HEK293 (cell line): ENCODE measurements at regions of chr12 and their contacts with region 1.

Region 1: DNA sequence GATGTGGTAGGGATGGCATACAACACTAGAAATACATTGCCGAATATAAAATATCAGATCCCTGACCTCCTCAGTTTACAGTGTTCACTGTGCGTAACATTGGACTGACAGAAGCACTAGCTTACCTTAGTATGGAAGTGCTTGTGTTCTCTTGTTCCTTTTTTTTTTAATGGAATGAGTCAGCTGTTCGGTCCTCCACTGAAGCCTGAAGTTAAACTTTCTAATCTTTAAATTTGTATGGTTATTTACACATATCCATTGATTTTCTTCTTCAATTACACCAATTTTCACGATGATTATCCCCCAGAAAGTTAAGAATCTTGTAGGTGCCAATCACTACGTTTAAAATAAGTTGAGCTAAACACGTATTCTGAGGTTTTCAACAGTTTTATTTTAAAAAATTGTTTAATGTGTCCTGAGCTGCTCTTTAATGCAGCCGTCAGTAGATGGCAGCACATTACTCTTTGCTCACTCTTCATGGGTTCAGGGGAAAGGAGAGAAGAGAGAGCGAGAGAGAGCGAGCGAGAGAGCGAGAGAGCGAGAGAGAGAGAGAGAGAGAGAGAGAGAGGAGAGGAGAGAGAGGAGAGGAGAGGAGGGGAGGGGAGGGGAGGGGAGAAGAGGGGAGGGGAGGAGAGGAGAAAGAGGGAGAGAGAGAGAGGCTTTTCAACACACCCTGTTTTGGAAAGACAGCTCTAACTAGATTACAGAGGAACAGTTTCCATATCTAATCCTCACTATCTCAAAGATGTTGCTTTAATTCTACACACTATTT is 134.7 kb upstream of the SCAF11 start:
- H3K4me3 ChIP-seq: no peak overlapping the region
- H3K27ac ChIP-seq: peak overlapping the region; percentile 71
- H3K4me1 ChIP-seq: peaks cover 11% of the 10 kb centered on the region
- CTCF ChIP-seq: peak; percentile 64

Region 2: GRCh38 chr12:45644541-45644940 is 480.5 kb before region 1 on chr12:
- CTCF ChIA-PET with region 1: no interaction called
- POLR2A ChIA-PET with region 1: no interaction called
- H3K4me3 ChIP-seq: no peak overlapping the region
- H3K27ac ChIP-seq: no peak overlapping the region
- H3K4me1 ChIP-seq: no peaks in the 10 kb centered on the region
- CTCF ChIP-seq: no peak

Region 3: DNA sequence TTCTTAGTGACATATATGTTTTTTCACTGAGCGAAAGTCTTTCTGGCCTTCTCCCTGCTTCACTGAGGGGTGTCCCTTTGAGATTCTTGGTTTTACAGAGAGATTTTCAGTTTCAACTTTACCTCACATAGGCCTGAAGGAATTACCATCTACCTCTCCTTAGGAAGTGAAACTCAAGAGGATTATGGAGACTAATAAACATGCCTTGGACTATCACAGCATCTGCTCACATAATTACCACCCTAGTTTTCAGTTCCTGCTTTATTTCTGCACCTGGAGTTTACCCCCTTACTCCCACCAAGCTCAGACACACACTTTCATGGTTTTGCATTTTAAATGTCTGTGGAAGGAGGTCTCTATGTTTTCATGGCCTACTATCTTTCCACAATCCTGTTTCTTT is 16.3 kb before region 1 on chr12:
- CTCF ChIA-PET with region 1: interaction called, 10 read pairs
- POLR2A ChIA-PET with region 1: no interaction called
- H3K4me3 ChIP-seq: no peak overlapping the region
- H3K27ac ChIP-seq: no peak overlapping the region
- H3K4me1 ChIP-seq: no peaks in the 10 kb centered on the region
- CTCF ChIP-seq: no peak

Region 4: GRCh38 chr12:46160101-46160980 is 35.3 kb after region 1 on chr12:
- CTCF ChIA-PET with region 1: interaction called, 19 read pairs
- POLR2A ChIA-PET with region 1: interaction called, 3 read pairs
- H3K4me3 ChIP-seq: no peak overlapping the region
- H3K27ac ChIP-seq: peak overlapping the region; percentile 72
- H3K4me1 ChIP-seq: peaks cover 12% of the 10 kb centered on the region
- CTCF ChIP-seq: no peak

Region 5: DNA sequence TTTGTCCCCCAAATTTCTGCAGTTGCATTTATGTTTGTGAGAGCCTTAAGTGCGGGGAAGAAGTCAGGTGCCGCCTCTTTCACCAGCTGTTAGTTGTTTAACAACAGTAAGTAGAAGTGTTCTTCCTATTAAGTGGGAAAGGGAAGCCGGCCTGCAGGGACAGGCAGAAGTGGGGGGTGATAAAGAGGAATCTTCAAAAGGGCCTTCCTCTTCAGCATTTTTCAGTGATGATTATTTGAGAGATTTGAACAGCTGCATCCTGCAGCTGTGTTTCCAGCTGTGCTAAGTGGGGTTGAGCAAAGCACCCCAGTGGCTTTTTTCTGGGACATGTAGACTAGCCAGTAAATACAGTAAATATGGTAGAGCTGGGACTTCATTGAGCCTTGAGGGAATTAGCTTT is 175.9 kb after region 1 on chr12:
- CTCF ChIA-PET with region 1: interaction called, 10 read pairs
- POLR2A ChIA-PET with region 1: no interaction called
- H3K4me3 ChIP-seq: no peak overlapping the region
- H3K27ac ChIP-seq: no peak overlapping the region
- H3K4me1 ChIP-seq: no peaks in the 10 kb centered on the region
- CTCF ChIP-seq: no peak